MCF 10A (cell line): ENCODE measurements at regions of chr9 and their contacts with region 1.

Region 1: GRCh38 chr9:19102631-19103345 is at the start of gene HAUS6:
- DNase-seq: peak; percentile 97
- H3K4me3 Mint-ChIP-seq: peak within 1 kb of the TSS; percentile 88
- H3K27ac Mint-ChIP-seq: peak within 1 kb of the TSS; percentile 87
- H3K4me1 Mint-ChIP-seq: peaks cover 10% of the 10 kb centered on the region
- H3K27me3 Mint-ChIP-seq: no peaks in the 10 kb centered on the region
- CTCF ChIP-seq: no peak
- total RNA-seq, gene HAUS6: 15.8 and 16.2 TPM in 2 replicates

Region 2: GRCh38 chr9:18639911-18640310 is 462.9 kb before region 1 on chr9:
- CTCF ChIA-PET with region 1: no interaction called
- POLR2A ChIA-PET with region 1: no interaction called
- intact Hi-C with region 1: no loop called
- DNase-seq: no peak
- H3K4me3 Mint-ChIP-seq: no peak overlapping the region
- H3K27ac Mint-ChIP-seq: no peak overlapping the region
- H3K4me1 Mint-ChIP-seq: no peaks in the 10 kb centered on the region
- H3K27me3 Mint-ChIP-seq: no peaks in the 10 kb centered on the region
- CTCF ChIP-seq: no peak

Region 3: GRCh38 chr9:19085295-19085694 is 17.5 kb before region 1 on chr9:
- CTCF ChIA-PET with region 1: interaction called, 7 read pairs
- POLR2A ChIA-PET with region 1: interaction called, 12 read pairs
- intact Hi-C with region 1: no loop called
- DNase-seq: peak; percentile 25
- H3K4me3 Mint-ChIP-seq: no peak overlapping the region
- H3K27ac Mint-ChIP-seq: peak overlapping the region; percentile 31
- H3K4me1 Mint-ChIP-seq: peaks cover 7% of the 10 kb centered on the region
- H3K27me3 Mint-ChIP-seq: no peaks in the 10 kb centered on the region
- CTCF ChIP-seq: peak; percentile 32

Region 4: GRCh38 chr9:19116107-19116790 is 13.5 kb after region 1 on chr9:
- CTCF ChIA-PET with region 1: interaction called, 4 read pairs
- POLR2A ChIA-PET with region 1: interaction called, 10 read pairs
- intact Hi-C with region 1: no loop called
- DNase-seq: peak; percentile 82
- H3K4me3 Mint-ChIP-seq: peak overlapping the region; percentile 16
- H3K27ac Mint-ChIP-seq: no peak overlapping the region
- H3K4me1 Mint-ChIP-seq: peaks cover 18% of the 10 kb centered on the region
- H3K27me3 Mint-ChIP-seq: no peaks in the 10 kb centered on the region
- CTCF ChIP-seq: no peak

Region 5: DNA sequence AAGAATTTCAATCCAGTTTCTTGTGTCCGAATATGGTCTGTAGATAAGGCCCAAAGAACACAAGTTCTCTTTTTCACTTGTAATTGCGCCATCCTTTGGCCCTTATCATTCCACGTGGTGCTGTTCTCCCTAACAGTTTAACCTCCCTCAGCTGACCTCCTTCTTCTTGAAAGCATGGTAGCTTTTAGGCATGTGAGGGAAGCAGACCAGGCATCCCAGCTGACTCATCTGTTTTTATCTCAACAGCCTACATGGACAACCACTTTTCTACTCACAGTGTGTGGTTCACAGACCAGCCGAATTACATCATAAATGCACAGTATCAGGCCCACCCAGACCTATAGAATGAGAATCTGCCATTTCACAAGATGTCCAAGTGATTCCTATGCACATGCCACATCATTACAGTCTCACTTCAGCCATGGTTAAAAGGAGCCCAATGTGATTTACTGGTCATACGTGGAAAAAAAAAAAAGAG is 51.4 kb after region 1 on chr9:
- CTCF ChIA-PET with region 1: interaction called, 3 read pairs
- POLR2A ChIA-PET with region 1: interaction called, 12 read pairs
- intact Hi-C with region 1: no loop called
- DNase-seq: peak; percentile 14
- H3K4me3 Mint-ChIP-seq: no peak overlapping the region
- H3K27ac Mint-ChIP-seq: no peak overlapping the region
- H3K4me1 Mint-ChIP-seq: peaks cover 7% of the 10 kb centered on the region
- H3K27me3 Mint-ChIP-seq: no peaks in the 10 kb centered on the region
- CTCF ChIP-seq: no peak

Region 6: GRCh38 chr9:19161257-19162025 is 58.7 kb after region 1 on chr9:
- CTCF ChIA-PET with region 1: no interaction called
- POLR2A ChIA-PET with region 1: interaction called, 12 read pairs
- intact Hi-C with region 1: loop called (anchors 2 kb)
- DNase-seq: peak; percentile 96
- H3K4me3 Mint-ChIP-seq: peak overlapping the region; percentile 11
- H3K27ac Mint-ChIP-seq: peak overlapping the region; percentile 94
- H3K4me1 Mint-ChIP-seq: peaks cover 17% of the 10 kb centered on the region
- H3K27me3 Mint-ChIP-seq: no peaks in the 10 kb centered on the region
- CTCF ChIP-seq: no peak

Region 7: DNA sequence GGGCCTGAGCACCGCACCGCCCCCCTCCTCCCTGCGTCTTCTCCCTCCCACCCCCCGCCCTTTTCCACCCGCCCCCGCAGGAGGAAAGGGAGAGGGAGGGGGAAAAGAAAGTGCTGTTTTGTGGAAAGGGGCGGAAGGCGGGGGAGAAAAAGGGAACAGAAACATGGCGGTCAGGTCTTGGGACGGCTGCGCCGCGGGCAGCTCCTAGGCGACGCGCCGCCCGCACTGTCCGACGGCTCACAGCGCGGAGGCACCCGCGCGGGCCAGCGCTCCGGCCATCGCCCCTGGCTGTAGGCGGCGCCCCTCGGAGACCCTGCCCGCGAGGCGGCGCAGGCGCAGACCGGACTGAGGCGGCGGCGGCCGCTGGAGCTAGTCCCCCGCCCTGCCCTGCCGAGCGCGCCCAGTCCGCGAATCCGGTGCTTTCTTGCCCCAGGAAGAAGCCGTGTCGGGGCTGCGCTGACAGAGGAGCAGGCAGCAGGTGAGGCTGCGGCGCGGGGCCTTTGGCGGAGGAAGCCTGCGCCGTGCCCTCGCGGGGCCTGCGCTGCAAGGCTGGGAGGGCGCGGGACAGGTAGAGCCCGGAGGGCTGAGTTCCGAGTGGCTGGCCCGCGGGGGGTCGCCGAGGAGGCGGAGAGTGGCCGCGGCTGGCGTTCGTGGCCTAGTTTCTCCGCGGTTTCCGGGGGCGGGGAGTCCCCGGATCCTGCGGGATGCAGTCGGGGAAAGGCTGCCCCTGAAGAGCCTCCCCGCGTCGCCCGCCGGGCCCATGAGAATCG is 127.8 kb after region 1 on chr9 and contains the start of gene DENND4C:
- CTCF ChIA-PET with region 1: no interaction called
- POLR2A ChIA-PET with region 1: interaction called, 6 read pairs
- intact Hi-C with region 1: loop called (anchors 2 kb)
- DNase-seq: peak; percentile 91
- H3K4me3 Mint-ChIP-seq: no peak within 1 kb of the TSS
- H3K27ac Mint-ChIP-seq: no peak within 1 kb of the TSS
- H3K4me1 Mint-ChIP-seq: peaks cover 12% of the 10 kb centered on the region
- H3K27me3 Mint-ChIP-seq: no peaks in the 10 kb centered on the region
- CTCF ChIP-seq: no peak
- total RNA-seq, gene DENND4C: 26.4 and 36.4 TPM in 2 replicates

Region 8: DNA sequence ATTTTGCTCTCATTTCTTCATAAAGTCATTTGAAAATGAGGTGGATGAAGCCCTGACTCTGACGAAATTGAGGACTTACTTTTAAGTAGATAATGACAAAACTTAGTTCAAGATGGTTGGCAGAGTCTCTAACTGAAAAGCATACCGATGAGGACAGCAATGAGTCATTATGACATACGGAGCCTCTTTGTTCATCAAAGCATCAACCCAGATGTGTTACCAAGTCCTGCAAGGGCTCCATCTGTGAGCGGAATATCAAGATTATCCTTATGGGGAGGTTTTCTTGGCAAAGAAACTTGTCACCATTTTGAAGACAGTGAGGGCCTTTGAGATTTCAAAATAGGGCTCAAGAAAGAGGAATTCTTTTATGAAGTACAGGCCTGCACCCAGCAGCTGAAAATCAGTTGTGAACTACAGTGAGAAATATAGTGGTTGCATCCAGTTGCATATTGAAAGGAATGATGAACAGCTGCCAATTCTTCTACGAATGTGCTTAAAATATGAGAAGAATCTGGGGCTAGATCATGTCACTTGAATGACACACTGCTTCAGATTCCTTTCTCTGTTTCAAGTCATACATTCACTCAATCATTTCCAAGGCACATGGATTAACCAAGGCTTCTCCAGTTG is 772.6 kb after region 1 on chr9:
- CTCF ChIA-PET with region 1: no interaction called
- POLR2A ChIA-PET with region 1: no interaction called
- intact Hi-C with region 1: no loop called
- DNase-seq: no peak
- H3K4me3 Mint-ChIP-seq: no peak overlapping the region
- H3K27ac Mint-ChIP-seq: no peak overlapping the region
- H3K4me1 Mint-ChIP-seq: no peaks in the 10 kb centered on the region
- H3K27me3 Mint-ChIP-seq: peaks cover 32% of the 10 kb centered on the region
- CTCF ChIP-seq: no peak